Natural killer cell (primary cell): ENCODE measurements at regions of chr11 and their contacts with region 1.

Region 1: GRCh38 chr11:70824605-70825245 is 426.4 kb downstream of the CTTN start:
- DNase-seq: no peak
- ATAC-seq: no peak
- H3K4me3 ChIP-seq: no peak overlapping the region
- H3K4me3 Mint-ChIP-seq: no peak overlapping the region
- H3K27ac ChIP-seq: no peak overlapping the region
- H3K27ac Mint-ChIP-seq: no peak overlapping the region
- H3K4me1 ChIP-seq: no peaks in the 10 kb centered on the region
- H3K4me1 Mint-ChIP-seq: peaks cover 0 to 4% of the 10 kb centered on the region in 2 donors
- H3K27me3 ChIP-seq: peaks cover 9% of the 10 kb centered on the region
- H3K27me3 Mint-ChIP-seq: peaks cover 26 to 42% of the 10 kb centered on the region in 2 donors
- CTCF ChIP-seq: no peak

Region 2: DNA sequence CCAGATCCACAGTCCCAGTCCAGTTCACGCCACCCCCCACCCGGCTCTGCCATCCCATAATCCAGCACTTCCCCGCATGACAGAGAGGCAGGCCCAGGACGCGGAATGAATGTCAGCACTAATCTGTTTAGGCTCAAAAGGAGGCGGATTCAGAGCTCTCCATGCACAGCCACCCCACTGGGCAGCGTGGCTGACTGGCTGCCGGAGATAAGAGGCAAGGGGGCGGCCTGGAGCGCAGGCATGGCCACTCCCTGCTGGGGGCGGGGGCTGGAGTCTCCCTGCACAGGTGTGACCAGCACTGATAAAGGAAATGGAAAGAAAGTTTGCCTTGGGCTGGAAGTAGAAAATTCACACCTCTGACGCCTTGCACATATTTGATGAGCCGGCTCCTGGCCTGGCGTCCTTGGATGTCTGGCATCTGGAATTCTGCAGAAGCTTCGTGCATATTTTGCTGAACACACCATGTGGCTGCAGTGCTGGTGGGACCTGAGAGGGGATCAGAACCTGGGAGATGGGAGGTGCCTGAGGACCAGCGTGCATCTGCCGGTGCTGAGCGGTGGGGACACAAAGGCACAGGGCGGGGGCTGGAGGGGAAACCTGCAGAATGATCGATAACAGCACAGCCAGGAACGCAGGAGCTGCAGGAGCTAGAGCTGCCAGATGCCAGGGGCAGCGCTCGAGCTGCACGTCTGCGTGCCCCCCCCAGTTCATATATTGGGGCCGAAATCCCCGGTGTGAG is 82.0 kb before region 1 on chr11:
- intact Hi-C with region 1: no loop called
- DNase-seq: no peak
- ATAC-seq: no peak
- H3K4me3 ChIP-seq: no peak overlapping the region
- H3K4me3 Mint-ChIP-seq: no peak overlapping the region
- H3K27ac ChIP-seq: no peak overlapping the region
- H3K27ac Mint-ChIP-seq: no peak overlapping the region
- H3K4me1 ChIP-seq: no peaks in the 10 kb centered on the region
- H3K4me1 Mint-ChIP-seq: no peaks in the 10 kb centered on the region
- H3K27me3 ChIP-seq: no peaks in the 10 kb centered on the region
- H3K27me3 Mint-ChIP-seq: peaks cover 0 to 5% of the 10 kb centered on the region in 2 donors
- CTCF ChIP-seq: no peak

Region 3: GRCh38 chr11:70772950-70773349 is 51.8 kb before region 1 on chr11:
- intact Hi-C with region 1: loop called (anchors 5 kb)
- DNase-seq: no peak
- ATAC-seq: no peak
- H3K4me3 ChIP-seq: no peak overlapping the region
- H3K4me3 Mint-ChIP-seq: no peak overlapping the region
- H3K27ac ChIP-seq: no peak overlapping the region
- H3K27ac Mint-ChIP-seq: no peak overlapping the region
- H3K4me1 ChIP-seq: no peaks in the 10 kb centered on the region
- H3K4me1 Mint-ChIP-seq: no peaks in the 10 kb centered on the region
- H3K27me3 ChIP-seq: no peaks in the 10 kb centered on the region
- H3K27me3 Mint-ChIP-seq: peaks cover 0 to 6% of the 10 kb centered on the region in 2 donors
- CTCF ChIP-seq: no peak

Region 4: GRCh38 chr11:70901951-70902521 is 77.3 kb after region 1 on chr11:
- intact Hi-C with region 1: no loop called
- DNase-seq: no peak
- ATAC-seq: no peak
- H3K4me3 ChIP-seq: no peak overlapping the region
- H3K4me3 Mint-ChIP-seq: no peak overlapping the region
- H3K27ac ChIP-seq: no peak overlapping the region
- H3K27ac Mint-ChIP-seq: no peak overlapping the region
- H3K4me1 ChIP-seq: no peaks in the 10 kb centered on the region
- H3K4me1 Mint-ChIP-seq: no peaks in the 10 kb centered on the region
- H3K27me3 ChIP-seq: no peaks in the 10 kb centered on the region
- H3K27me3 Mint-ChIP-seq: no peaks in the 10 kb centered on the region
- CTCF ChIP-seq: no peak